ENCODE measurements at regions of chr17 and their contacts with region 1.

Region 1: DNA sequence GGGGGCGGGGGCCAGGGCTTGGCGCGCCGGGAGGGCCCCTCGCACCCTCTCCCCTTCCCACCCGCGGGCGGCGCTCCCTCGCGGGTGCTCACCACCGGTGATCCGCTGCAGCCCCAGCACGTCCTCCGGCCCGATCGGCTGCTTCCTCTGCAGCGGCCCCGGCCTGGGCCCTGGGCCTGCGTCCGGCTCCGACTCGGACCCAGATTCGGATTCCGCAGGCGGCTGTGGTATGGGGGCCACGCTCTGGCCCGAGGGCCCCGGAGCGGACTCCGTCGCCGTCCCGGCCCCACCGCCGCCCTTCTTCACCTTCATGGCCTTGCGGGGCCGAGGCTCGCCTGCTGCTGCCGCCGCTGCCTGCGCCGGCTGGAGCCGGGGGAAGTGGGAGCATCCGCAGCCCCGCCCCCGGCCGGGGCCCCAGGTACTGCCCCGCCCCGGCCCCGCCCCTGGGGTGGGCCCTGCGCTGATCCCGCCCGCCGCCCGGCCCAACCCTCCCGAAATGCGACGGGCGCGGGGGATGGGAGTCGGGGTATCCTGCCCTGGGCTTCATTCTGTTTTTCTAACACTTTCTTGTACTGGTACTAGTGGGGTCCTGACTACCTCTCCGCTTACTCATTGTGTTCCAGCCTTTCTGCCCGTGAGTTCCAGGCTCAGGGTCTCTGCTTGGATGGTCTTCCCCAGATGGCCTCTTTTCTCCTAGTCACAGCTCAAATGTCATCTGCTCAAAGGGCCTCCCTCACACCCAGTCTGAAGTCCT is at the start of gene UNC119:
- DNase-seq: peak; percentile 82
- H3K4me3 ChIP-seq: peak within 1 kb of the TSS; percentile 78 to 96 (median 94)
- H3K27ac ChIP-seq: peak within 1 kb of the TSS; percentile 75 to 83 (median 79)
- H3K4me1 ChIP-seq: peaks cover 0 to 30% (median 20%) of the 10 kb centered on the region in 4 donors
- H3K27me3 ChIP-seq: no peaks in the 10 kb centered on the region
- CTCF ChIP-seq: no peak
- EP300 ChIP-seq: no peak
- POLR2A ChIP-seq: peak; percentile 10 to 22
- total RNA-seq, gene UNC119: 20.7 to 25.8 (median 23.6) TPM

Region 2: DNA sequence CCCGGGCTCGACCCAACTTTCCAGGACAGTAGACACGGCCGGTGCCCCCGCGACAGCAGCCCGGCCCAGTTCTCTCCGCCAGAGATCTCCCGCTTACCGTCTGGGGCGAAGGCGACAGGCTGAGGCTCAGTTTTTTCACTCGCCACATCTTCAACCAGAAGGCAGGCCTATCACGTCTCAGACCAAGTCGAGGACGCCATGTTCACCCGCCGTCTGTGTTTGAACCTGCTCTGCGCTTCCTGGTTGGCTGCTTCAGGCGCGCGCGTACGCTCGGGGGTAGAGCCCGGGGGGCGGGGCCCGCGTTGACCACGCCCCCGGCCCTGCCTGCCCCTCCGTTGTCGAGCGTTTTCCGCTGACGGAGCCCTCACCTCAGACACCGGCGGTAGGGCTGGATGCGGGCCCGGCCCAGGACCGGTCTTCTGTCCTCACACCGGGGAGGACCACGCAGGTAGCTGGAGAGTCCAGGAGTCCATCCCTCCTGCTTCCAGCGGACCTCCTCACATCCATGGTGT is 46.4 kb after region 1 on chr17 and contains the start of gene SPAG5:
- intact Hi-C with region 1: loop called (anchors 5 kb)
- DNase-seq: peak; percentile 97
- H3K4me3 ChIP-seq: peak within 1 kb of the TSS; percentile 52 to 63 (median 55)
- H3K27ac ChIP-seq: peak within 1 kb of the TSS; percentile 85 to 92 (median 89)
- H3K4me1 ChIP-seq: peaks cover 2 to 19% (median 14%) of the 10 kb centered on the region in 4 donors
- H3K27me3 ChIP-seq: no peaks in the 10 kb centered on the region
- CTCF ChIP-seq: no peak
- EP300 ChIP-seq: no peak
- POLR2A ChIP-seq: peak; percentile 84 to 86
- total RNA-seq, gene SPAG5: 0.33 to 3.9 (median 1.6) TPM

Region 3: DNA sequence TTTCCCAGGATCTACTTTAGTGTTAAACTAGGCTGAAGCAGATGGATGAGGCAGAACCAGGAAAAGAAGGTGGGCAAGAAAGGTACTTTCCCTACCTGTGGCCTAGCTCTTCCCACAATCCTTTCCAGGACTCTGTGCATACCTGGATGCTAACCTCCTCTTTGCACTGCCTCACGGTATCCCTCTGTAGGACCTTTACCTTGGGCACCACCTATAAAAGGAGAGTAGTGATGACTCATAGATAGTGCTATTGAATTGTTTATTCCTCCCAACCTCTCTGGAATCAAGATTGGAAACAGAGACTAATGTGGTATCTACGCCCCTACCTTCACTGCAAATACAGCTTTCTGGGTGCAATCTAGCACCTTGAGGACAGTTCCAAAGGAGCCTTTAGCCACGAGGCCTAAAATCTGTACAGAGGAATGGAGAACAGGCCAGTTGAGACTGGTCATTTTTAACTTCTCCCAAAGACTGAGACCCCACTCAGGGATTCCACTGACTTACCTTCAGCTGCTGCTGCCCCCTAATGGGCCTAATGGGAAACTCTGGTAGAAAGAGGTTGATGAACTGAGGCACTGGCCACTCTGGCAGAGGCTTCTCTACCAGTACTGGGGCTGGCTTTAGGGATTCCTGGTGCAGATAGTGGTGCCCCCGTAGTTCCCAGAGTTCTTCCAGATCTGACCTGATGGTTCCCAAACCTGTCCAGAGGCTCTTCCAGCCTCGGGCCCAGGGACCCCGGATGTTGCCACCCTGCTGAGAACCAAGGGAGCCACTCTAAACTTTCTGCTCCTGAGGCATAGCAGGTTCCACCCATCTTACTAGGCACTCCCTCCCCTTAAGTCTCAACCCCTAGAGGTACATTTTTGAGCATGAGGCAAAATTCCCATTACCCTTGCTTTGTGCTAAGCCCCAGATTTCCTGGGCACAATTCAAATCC is 60.8 kb after region 1 on chr17:
- intact Hi-C with region 1: loop called (anchors 5 kb)
- DNase-seq: no peak
- H3K4me3 ChIP-seq: no peak overlapping the region
- H3K27ac ChIP-seq: no peak overlapping the region
- H3K4me1 ChIP-seq: no peaks in the 10 kb centered on the region
- H3K27me3 ChIP-seq: no peaks in the 10 kb centered on the region
- CTCF ChIP-seq: peak; percentile 21 to 72 (median 48)
- EP300 ChIP-seq: no peak
- POLR2A ChIP-seq: no peak

Measured in sigmoid colon (tissue), 7 donors.